Kidney (tissue), 22 donors: ENCODE measurements at regions of chr5 and their contacts with region 1.

Region 1: DNA sequence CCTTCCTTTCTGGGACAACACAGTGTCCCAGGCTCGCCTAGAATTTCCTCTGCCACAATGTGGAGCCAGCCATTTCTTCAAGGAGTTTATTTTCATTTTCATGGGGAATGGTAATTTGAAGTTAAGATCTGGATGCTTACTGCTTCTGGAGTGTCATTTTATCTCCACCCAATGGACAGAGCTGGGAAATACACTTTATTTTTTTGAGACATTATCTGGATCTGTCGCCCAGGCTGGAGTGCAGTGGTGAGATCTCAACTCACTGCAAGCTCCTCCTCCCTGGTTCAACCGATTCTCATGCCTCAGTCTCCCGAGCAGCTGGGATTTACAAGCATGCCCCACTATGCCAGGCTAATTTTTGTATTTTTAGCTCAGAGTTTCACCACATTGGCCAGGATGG is 12.7 kb upstream of the THG1L start:
- DNase-seq: peak in 3 of 5 donors; percentile 14 to 84 (median 76)
- H3K4me3 ChIP-seq: no peak overlapping the region
- H3K27ac ChIP-seq: no peak overlapping the region
- H3K4me1 ChIP-seq: peaks cover 0 to 2% (median 0%) of the 10 kb centered on the region in 3 donors
- H3K27me3 ChIP-seq: no peaks in the 10 kb centered on the region
- CTCF ChIP-seq: peak; percentile 52

Region 2: DNA sequence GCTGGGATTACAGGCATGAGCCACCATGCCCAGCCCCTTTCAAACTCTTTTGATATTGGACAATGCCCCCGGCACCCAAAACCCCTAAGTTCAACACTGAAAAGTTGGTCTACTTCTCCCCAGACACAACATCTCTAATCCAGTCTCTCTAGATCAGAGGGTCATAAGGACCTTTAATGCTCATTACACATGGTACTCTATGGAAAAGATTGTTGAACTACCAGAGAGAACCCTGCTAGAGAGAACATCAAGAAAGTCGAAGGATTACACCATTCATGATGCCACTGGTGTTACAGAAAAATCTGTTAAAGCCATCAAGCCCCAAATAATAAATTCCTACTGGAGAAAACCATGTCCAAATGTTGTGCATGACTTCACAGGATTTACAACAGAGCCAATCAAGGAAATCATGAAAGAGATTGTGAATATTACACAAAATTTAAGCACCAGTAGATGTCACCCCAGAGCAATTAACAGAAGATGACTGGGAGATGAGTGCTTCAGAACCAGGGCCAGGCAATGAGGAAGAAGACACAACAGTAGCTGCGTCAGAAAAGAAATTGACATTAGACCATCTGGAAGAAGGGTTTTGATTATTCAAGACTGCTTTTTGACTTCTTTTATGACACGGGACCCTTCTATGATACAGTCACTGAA is 286.8 kb before region 1 on chr5:
- intact Hi-C with region 1: loop called (anchors 10 kb)
- DNase-seq: peak in 2 of 5 donors; percentile 69 to 77
- H3K4me3 ChIP-seq: no peak overlapping the region
- H3K27ac ChIP-seq: no peak overlapping the region
- H3K4me1 ChIP-seq: no peaks in the 10 kb centered on the region
- H3K27me3 ChIP-seq: no peaks in the 10 kb centered on the region
- CTCF ChIP-seq: peak; percentile 38